Aorta (tissue), 5 donors: ENCODE measurements at regions of chr1 and their contacts with region 1.

Region 1: GRCh38 chr1:161382214-161383019 is 14.7 kb upstream of the CFAP126 start:
- DNase-seq: no peak
- ATAC-seq: peak; percentile 86
- H3K4me3 ChIP-seq: no peak overlapping the region
- H3K27ac ChIP-seq: no peak overlapping the region
- H3K4me1 ChIP-seq: no peaks in the 10 kb centered on the region
- H3K27me3 ChIP-seq: no peaks in the 10 kb centered on the region

Region 2: GRCh38 chr1:161192476-161193465 is 189.6 kb before region 1 on chr1:
- intact Hi-C with region 1: loop called in 1 of 2 experiments (anchors 5 kb)
- DNase-seq: peak; percentile 30 to 75
- ATAC-seq: peak; percentile 81
- H3K4me3 ChIP-seq: no peak overlapping the region
- H3K27ac ChIP-seq: no peak overlapping the region
- H3K4me1 ChIP-seq: no peaks in the 10 kb centered on the region
- H3K27me3 ChIP-seq: no peaks in the 10 kb centered on the region

Region 3: DNA sequence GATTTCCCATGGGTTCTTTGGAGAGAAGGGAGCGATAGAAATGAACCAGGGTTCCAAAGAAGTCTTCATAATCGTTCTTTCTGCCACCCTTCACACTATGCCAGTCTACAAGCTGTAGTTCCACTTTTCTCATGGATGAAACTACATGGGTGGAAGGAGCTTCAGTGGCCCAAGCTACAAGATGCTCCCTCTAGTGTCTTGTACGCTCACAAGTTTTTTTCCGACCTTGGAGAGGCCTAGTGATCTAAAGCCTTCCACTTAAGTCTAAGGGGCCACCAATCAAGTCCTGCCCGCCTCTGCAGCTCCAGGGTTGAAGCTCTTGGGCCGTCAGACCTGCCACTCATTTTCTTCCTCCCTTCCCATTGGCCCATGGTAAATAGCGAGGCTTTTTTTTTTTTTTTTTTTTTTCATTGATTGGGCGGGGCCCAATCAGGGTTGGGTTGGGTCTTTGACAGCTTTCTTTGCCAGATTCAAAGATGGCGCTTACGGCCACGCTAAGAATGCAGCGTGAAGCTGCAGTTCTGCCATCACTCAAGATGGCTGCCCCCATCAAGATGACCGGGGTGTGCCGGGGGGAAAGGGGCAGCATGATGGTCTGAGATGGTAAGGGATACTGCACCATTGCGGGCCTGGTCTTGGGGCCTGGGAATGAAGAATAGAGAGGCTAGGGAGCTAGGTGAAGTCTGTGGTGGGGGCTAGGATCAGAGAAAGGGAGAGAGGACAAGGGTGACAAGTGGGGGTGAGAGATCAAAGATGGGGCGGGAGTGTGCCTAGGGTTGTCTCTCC is 156.7 kb before region 1 on chr1 and contains the start of gene TOMM40L:
- intact Hi-C with region 1: loop called (anchors 2 kb)
- DNase-seq: peak; percentile 91 to 95
- ATAC-seq: peak; percentile 95
- H3K4me3 ChIP-seq: peak within 1 kb of the TSS; percentile 47 to 85
- H3K27ac ChIP-seq: no peak within 1 kb of the TSS
- H3K4me1 ChIP-seq: no peaks in the 10 kb centered on the region
- H3K27me3 ChIP-seq: no peaks in the 10 kb centered on the region
- total RNA-seq, gene TOMM40L: 10.0 to 12.9 TPM

Region 4: GRCh38 chr1:161305867-161306519 is 76.4 kb before region 1 on chr1:
- intact Hi-C with region 1: loop called in 1 of 2 experiments (anchors 5 kb)
- DNase-seq: peak; percentile 87
- ATAC-seq: peak; percentile 91
- H3K4me3 ChIP-seq: peak overlapping the region; percentile 35 to 54
- H3K27ac ChIP-seq: no peak overlapping the region
- H3K4me1 ChIP-seq: no peaks in the 10 kb centered on the region
- H3K27me3 ChIP-seq: no peaks in the 10 kb centered on the region